CD14-positive monocyte (primary cell): ENCODE measurements at regions of chr12 and their contacts with region 1.

Region 1: DNA sequence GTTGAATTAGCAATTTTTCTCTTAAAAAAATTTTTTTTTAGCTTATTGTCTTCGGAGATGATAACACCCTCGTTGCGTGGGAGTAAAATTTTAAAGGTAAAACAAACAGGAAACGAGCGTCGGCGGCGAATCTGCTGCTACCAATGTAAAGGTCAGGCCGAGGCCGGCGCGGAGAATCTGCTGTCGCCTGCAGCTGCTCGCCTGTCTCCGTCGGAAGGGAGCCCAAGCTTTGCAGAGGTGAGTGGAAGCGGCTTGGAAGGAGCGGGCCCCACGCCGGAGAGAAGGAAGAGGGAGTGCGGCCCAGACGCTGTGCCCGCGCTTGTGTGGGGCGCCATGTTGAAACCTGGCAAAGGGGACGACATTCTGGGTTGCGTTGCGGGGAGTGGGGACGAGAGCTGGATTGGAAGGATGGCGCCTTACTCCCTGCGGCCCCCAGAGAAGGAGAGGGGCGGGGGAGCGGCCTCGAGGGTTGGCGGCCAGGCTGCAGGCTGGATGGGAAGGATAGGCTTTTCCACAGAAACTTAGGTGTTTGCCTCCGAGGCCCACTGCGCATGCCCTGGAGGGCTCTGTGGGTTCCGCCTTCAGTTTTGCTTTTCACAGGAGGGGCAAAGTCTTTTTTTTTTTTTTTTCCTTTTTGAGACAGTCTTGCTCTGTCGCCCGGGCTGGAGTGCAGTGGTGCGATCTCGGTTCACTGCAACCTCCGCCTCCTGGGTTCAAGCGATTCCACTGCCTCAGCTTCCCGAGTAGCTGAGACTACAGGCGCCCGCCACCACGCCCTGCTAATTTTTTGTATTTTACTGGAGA is at the start of gene SNRNP35:
- DNase-seq: peak; percentile 73 to 76 (median 74)
- H3K4me3 ChIP-seq: peak within 1 kb of the TSS; percentile 56 to 98 (median 74)
- H3K4me3 Mint-ChIP-seq: peak within 1 kb of the TSS; percentile 97 to 99
- H3K27ac ChIP-seq: peak within 1 kb of the TSS; percentile 97 to 99
- H3K27ac Mint-ChIP-seq: peak within 1 kb of the TSS; percentile 99 to 100 (median 100)
- H3K4me1 ChIP-seq: peaks cover 16 to 18% of the 10 kb centered on the region in 2 donors
- H3K4me1 Mint-ChIP-seq: peaks cover 20% of the 10 kb centered on the region
- H3K27me3 ChIP-seq: no peaks in the 10 kb centered on the region
- H3K27me3 Mint-ChIP-seq: no peaks in the 10 kb centered on the region
- CTCF ChIP-seq: no peak
- polyA plus RNA-seq, gene SNRNP35: 13.4 to 19.5 (median 16.7) TPM

Region 2: GRCh38 chr12:123580772-123581171 is 122.6 kb after region 1 on chr12:
- intact Hi-C with region 1: loop called in 1 of 2 experiments (anchors 5 kb)
- DNase-seq: no peak
- H3K4me3 ChIP-seq: no peak overlapping the region
- H3K4me3 Mint-ChIP-seq: no peak overlapping the region
- H3K27ac ChIP-seq: no peak overlapping the region
- H3K27ac Mint-ChIP-seq: no peak overlapping the region
- H3K4me1 ChIP-seq: peaks cover 23 to 29% of the 10 kb centered on the region in 2 donors
- H3K4me1 Mint-ChIP-seq: peaks cover 24% of the 10 kb centered on the region
- H3K27me3 ChIP-seq: no peaks in the 10 kb centered on the region
- H3K27me3 Mint-ChIP-seq: peaks cover 0 to 2% (median 2%) of the 10 kb centered on the region in 3 donors
- CTCF ChIP-seq: no peak